Common myeloid progenitor, CD34-positive (primary cell): ENCODE measurements at regions of chr1 and their contacts with region 1.

Region 1: DNA sequence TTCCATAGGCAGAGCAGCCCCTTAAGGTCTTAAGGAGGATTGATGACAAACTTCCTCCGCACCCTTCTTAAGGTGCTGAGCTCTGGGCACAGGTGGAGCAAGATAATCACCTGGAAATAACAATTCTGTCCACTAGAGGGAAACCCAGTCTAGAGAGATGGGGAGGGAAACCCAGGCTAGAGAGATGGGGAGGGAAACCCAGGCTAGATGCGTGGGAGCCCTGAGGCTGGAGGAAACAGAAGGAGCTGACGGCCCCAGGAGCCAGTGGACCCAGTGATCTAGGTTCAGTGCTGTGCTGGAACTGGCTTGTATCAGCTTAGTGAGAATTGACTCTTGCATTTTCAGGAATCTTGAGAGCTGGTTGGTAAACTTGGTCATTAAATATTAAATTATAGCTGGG is 17.8 kb upstream of the MYCL start:
- DNase-seq: peak; percentile 67 to 85 (median 80)
- H3K4me3 ChIP-seq: no peak overlapping the region
- H3K27ac ChIP-seq: no peak overlapping the region
- H3K4me1 ChIP-seq: peaks cover 0 to 3% (median 0%) of the 10 kb centered on the region in 4 experiments
- H3K27me3 ChIP-seq: no peaks in the 10 kb centered on the region

Region 2: DNA sequence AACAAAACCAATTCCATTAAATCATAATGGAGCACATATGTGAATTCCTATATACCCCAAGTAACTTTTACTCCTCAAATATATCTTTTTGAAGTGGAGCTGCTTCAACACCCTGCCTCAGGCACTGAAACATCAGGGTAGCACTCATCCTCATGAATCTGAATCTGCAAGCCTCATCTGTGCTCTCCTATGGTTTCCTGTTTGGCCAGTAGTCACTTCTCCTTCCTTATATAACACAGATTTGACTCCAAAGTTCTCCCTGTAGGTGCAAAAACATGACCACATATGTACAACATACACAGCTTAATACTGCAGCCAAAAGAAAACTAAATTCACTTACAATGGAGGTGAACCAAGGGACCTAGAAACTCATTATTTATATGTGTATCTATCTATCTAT is 43.4 kb before region 1 on chr1:
- CTCF ChIA-PET with region 1: no interaction called
- POLR2A ChIA-PET with region 1: no interaction called
- DNase-seq: peak in 2 of 3 donors; percentile 30 to 31
- H3K4me3 ChIP-seq: no peak overlapping the region
- H3K27ac ChIP-seq: no peak overlapping the region
- H3K4me1 ChIP-seq: peaks cover 8 to 24% (median 10%) of the 10 kb centered on the region in 4 experiments
- H3K27me3 ChIP-seq: no peaks in the 10 kb centered on the region

Region 3: DNA sequence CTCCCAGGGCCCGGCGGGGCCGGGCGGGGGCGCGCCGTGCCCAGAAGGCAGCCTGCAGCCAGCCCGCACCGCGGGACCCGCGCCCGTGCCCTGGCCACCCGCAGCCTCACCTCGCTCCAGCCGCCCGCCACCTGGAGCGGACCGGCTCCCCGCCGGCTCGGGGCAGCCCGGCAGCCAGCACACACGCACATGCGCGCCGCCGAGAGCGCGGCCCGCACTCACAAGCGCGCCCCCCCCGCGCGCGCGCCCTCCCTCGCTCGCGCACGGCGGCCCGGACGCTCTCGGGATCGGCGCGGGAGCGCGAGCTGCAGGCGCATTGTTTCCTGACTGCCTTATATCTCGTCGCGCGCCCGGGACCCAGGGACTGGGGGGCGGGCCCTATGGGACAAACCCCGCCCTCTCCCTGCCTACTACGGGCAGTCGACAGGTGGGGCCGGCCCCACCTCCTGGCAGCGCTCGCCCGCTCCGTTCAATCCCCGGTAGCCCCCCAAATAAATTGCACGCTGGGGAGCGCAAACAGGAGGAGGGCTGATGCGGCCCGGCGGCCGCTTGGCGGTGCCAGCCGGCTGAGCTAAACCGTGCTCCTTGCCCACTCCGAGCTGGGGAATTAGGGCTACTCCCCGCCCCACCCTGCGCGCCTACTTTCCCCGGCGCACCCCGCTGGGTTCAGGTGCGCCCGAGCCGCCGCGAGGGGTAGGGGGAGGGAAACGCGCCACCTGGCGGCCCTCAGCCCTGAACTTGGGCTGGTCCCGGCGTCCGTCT is 17.7 kb before region 1 on chr1 and contains the start of gene MYCL:
- CTCF ChIA-PET with region 1: interaction called, 11 read pairs
- POLR2A ChIA-PET with region 1: no interaction called
- DNase-seq: peak; percentile 31 to 63 (median 54)
- H3K4me3 ChIP-seq: peak within 1 kb of the TSS; percentile 32 to 78 (median 70)
- H3K27ac ChIP-seq: no peak within 1 kb of the TSS
- H3K4me1 ChIP-seq: peaks cover 0 to 20% (median 18%) of the 10 kb centered on the region in 4 experiments
- H3K27me3 ChIP-seq: peaks cover 22 to 78% (median 32%) of the 10 kb centered on the region in 5 experiments

Region 4: GRCh38 chr1:39933956-39934941 is 14.7 kb after region 1 on chr1:
- CTCF ChIA-PET with region 1: interaction called, 40 read pairs
- POLR2A ChIA-PET with region 1: no interaction called
- DNase-seq: peak; percentile 35 to 68 (median 67)
- H3K4me3 ChIP-seq: no peak overlapping the region
- H3K27ac ChIP-seq: no peak overlapping the region
- H3K4me1 ChIP-seq: peaks cover 0 to 40% (median 18%) of the 10 kb centered on the region in 4 experiments
- H3K27me3 ChIP-seq: no peaks in the 10 kb centered on the region

Region 5: GRCh38 chr1:39949871-39950448 is 30.4 kb after region 1 on chr1:
- CTCF ChIA-PET with region 1: interaction called, 10 read pairs
- POLR2A ChIA-PET with region 1: no interaction called
- DNase-seq: no peak
- H3K4me3 ChIP-seq: no peak overlapping the region
- H3K27ac ChIP-seq: no peak overlapping the region
- H3K4me1 ChIP-seq: peaks cover 0 to 8% (median 5%) of the 10 kb centered on the region in 4 experiments
- H3K27me3 ChIP-seq: no peaks in the 10 kb centered on the region

Region 6: GRCh38 chr1:39954816-39955546 is 35.4 kb after region 1 on chr1 and contains the start of gene MFSD2A:
- CTCF ChIA-PET with region 1: interaction called, 15 read pairs
- POLR2A ChIA-PET with region 1: interaction called, 3 read pairs
- DNase-seq: peak; percentile 81 to 90 (median 89)
- H3K4me3 ChIP-seq: peak within 1 kb of the TSS; percentile 29 to 79 (median 62)
- H3K27ac ChIP-seq: no peak within 1 kb of the TSS
- H3K4me1 ChIP-seq: peaks cover 2 to 43% (median 23%) of the 10 kb centered on the region in 4 experiments
- H3K27me3 ChIP-seq: peaks cover 0 to 5% (median 0%) of the 10 kb centered on the region in 5 experiments

Region 7: GRCh38 chr1:39973503-39974135 is 54.1 kb after region 1 on chr1:
- CTCF ChIA-PET with region 1: interaction called, 274 read pairs
- POLR2A ChIA-PET with region 1: interaction called, 5 read pairs
- DNase-seq: peak; percentile 56 to 77 (median 69)
- H3K4me3 ChIP-seq: peak overlapping the region in 1 of 7 experiments; percentile 12
- H3K27ac ChIP-seq: no peak overlapping the region
- H3K4me1 ChIP-seq: peaks cover 0 to 2% (median 0%) of the 10 kb centered on the region in 4 experiments
- H3K27me3 ChIP-seq: no peaks in the 10 kb centered on the region

Region 8: GRCh38 chr1:40032240-40032891 is 112.8 kb after region 1 on chr1:
- CTCF ChIA-PET with region 1: interaction called, 63 read pairs
- POLR2A ChIA-PET with region 1: no interaction called
- DNase-seq: peak; percentile 65 to 78 (median 78)
- H3K4me3 ChIP-seq: no peak overlapping the region
- H3K27ac ChIP-seq: no peak overlapping the region
- H3K4me1 ChIP-seq: peaks cover 31 to 62% (median 54%) of the 10 kb centered on the region in 4 experiments
- H3K27me3 ChIP-seq: no peaks in the 10 kb centered on the region